ENCODE measurements at regions of chr12 and their contacts with region 1.

Region 1: GRCh38 chr12:52980693-52981423 is 25.4 kb upstream of the EIF4B start:
- DNase-seq: peak; percentile 80
- H3K4me3 ChIP-seq: no peak overlapping the region
- H3K27ac ChIP-seq: no peak overlapping the region
- H3K27me3 ChIP-seq: peaks cover 2% of the 10 kb centered on the region
- CTCF ChIP-seq: peak; percentile 99

Region 2: DNA sequence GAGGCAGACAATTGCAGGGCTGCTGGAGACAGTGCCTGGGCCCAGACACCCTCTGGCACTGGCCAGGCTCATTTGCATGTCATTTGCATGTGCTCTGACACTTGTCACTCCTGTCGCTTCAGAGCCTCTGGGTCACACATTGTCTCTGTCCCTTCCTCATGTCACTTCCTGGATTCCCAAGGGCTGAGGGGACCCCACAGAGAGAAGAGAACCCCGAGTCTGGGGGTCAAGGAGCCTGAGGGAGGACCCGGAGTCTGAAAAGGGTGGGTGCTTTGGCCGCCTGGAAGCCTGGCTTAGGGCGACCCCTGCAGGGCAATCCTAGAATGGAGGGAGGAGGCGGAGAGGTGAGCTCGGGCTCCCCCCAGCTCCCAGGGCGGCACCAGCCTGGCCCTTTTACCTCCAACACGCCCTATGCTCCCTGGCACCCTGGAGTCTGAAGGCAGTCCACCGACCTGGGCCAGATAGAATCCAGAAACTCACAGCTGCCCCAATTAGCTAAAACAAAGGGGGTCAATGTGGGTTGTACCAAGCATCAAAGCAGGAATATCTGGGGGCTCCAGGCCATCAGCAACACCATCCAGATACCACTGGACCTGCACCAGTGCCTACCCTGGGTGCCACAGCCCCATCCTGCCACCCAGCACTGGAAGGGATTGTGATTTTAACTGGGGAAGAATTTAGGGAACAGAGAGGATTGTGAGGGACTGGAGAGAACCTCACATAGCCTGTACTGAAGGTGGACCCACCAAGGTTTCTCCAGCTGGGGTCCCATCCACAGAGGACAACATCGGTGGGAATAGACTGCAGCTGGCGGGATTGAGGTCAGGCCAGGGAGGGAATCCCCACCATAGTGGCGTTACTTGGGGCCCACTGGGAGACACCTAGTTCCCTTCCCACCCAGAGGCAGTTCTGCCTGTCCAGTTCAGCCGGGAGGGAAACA is 110.2 kb before region 1 on chr12:
- CTCF ChIA-PET with region 1: interaction called, 1,204 read pairs
- POLR2A ChIA-PET with region 1: interaction called, 3 read pairs
- DNase-seq: no peak
- H3K4me3 ChIP-seq: no peak overlapping the region
- H3K27ac ChIP-seq: peak overlapping the region; percentile 75
- H3K27me3 ChIP-seq: no peaks in the 10 kb centered on the region
- CTCF ChIP-seq: peak; percentile 72

Region 3: DNA sequence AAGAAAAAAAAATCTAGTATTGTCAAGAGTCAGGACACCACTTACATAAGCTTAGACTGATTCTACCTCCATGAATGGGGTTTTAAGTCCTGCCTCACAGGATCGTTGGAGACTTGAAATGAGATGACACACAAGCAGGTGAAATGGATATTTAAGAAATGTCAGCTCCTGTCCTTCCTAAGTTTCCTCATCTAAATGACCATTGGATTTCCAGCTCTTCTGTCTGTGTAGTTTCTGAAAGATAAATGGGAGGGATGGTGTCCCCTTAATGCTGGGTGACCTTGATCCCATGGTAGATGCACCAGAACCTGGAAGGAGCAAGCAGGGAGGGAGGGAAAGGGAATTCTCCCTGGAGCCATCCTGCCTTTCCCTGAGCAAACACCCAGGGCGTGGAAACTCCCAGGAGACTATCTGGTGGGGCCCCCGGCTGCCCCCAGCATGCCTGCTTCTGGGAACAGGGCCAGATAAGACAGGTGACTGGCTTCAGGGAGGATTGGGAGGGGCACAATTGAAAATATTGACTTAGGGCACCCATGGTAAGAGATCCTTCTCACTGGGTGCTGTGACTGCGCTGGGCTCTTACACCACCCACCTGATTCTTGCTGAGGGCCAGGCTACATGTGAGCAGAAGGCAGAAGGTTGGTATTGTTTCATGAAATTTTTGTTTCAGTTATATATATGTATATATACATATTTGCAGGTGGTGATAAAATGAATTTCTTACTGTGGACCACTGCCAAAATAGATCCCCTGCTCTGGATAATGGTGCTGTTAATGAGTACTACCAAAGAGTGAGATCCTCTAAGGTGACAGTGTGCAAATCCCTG is 85.6 kb before region 1 on chr12:
- CTCF ChIA-PET with region 1: interaction called, 1,204 read pairs
- POLR2A ChIA-PET with region 1: no interaction called
- DNase-seq: no peak
- H3K4me3 ChIP-seq: no peak overlapping the region
- H3K27ac ChIP-seq: no peak overlapping the region
- H3K27me3 ChIP-seq: peaks cover 5% of the 10 kb centered on the region
- CTCF ChIP-seq: no peak

Region 4: GRCh38 chr12:52924764-52925716 is 55.8 kb before region 1 on chr12:
- CTCF ChIA-PET with region 1: interaction called, 32 read pairs
- POLR2A ChIA-PET with region 1: no interaction called
- DNase-seq: peak; percentile 62
- H3K4me3 ChIP-seq: no peak overlapping the region
- H3K27ac ChIP-seq: peak overlapping the region; percentile 91
- H3K27me3 ChIP-seq: no peaks in the 10 kb centered on the region
- CTCF ChIP-seq: no peak

Region 5: GRCh38 chr12:52949413-52950331 is 31.2 kb before region 1 on chr12:
- CTCF ChIA-PET with region 1: interaction called, 14 read pairs
- POLR2A ChIA-PET with region 1: no interaction called
- DNase-seq: peak; percentile 73
- H3K4me3 ChIP-seq: peak overlapping the region; percentile 74
- H3K27ac ChIP-seq: peak overlapping the region; percentile 61
- H3K27me3 ChIP-seq: no peaks in the 10 kb centered on the region
- CTCF ChIP-seq: no peak

Region 6: DNA sequence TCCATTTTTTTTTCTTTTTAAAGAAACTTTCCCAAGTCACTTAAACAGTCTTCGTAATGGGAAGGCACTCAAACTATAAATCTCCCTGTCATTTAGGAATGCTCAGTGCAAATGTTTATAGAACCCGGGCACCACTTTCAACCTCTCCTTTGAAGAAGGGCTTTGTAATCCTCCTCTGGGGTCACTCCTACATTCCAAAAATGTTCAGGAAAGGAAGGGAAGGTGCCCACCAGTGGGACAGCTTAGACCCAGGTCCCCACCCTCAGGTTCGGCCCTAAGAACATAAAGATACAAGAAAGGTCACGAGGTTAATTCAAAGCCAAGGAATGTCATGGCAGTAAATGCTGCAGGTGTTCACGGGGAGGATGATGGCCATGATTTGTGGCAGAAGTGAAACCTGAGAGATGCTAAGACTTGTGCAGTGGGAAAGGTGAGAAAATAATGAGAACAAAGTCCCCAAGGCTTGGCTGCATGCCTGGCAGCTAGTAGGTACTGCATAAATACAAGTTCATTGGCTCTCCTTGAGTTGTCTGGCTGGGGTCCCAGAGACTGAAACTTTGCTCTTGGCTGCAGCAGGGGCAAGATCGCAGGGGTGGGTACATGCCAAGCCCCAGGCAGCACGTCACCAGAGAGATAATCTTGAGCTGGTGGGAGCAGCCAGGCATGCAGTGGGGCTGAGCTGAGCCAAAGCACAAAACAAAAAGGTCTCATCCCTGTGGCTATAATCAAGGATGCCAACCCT is 10.9 kb before region 1 on chr12:
- CTCF ChIA-PET with region 1: interaction called, 50 read pairs
- POLR2A ChIA-PET with region 1: interaction called, 8 read pairs
- DNase-seq: no peak
- H3K4me3 ChIP-seq: no peak overlapping the region
- H3K27ac ChIP-seq: no peak overlapping the region
- H3K27me3 ChIP-seq: no peaks in the 10 kb centered on the region
- CTCF ChIP-seq: no peak

Region 7: GRCh38 chr12:53005986-53006809 is 25.3 kb after region 1 on chr12 and contains the start of gene EIF4B:
- CTCF ChIA-PET with region 1: interaction called, 12 read pairs
- POLR2A ChIA-PET with region 1: interaction called, 3 read pairs
- DNase-seq: peak; percentile 99
- H3K4me3 ChIP-seq: peak within 1 kb of the TSS; percentile 100
- H3K27ac ChIP-seq: peak within 1 kb of the TSS; percentile 87
- H3K27me3 ChIP-seq: no peaks in the 10 kb centered on the region
- CTCF ChIP-seq: no peak
- polyA plus RNA-seq, gene EIF4B: 548 and 645 TPM in 2 replicates